CD4-positive, alpha-beta memory T cell (primary cell): ENCODE measurements at regions of chr6 and their contacts with region 1.

Region 1: DNA sequence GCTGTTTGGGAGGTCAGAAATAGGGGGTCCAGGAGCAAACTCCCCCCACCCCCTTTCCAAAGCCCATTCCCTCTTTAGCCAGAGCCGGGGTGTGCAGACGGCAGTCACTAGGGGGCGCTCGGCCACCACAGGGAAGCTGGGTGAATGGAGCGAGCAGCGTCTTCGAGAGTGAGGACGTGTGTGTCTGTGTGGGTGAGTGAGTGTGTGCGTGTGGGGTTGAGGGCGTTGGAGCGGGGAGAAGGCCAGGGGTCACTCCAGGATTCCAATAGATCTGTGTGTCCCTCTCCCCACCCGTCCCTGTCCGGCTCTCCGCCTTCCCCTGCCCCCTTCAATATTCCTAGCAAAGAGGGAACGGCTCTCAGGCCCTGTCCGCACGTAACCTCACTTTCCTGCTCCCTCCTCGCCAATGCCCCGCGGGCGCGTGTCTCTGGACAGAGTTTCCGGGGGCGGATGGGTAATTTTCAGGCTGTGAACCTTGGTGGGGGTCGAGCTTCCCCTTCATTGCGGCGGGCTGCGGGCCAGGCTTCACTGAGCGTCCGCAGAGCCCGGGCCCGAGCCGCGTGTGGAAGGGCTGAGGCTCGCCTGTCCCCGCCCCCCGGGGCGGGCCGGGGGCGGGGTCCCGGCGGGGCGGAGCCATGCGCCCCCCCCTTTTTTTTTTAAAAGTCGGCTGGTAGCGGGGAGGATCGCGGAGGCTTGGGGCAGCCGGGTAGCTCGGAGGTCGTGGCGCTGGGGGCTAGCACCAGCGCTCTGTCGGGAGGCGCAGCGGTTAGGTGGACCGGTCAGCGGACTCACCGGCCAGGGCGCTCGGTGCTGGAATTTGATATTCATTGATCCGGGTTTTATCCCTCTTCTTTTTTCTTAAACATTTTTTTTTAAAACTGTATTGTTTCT is at the start of gene VEGFA:
- DNase-seq: peak; percentile 85 to 87 (median 86)
- H3K4me3 ChIP-seq: peak within 1 kb of the TSS; percentile 82 to 90
- H3K4me3 Mint-ChIP-seq: peak within 1 kb of the TSS; percentile 85 to 98 (median 92)
- H3K27ac ChIP-seq: peak within 1 kb of the TSS; percentile 23
- H3K27ac Mint-ChIP-seq: peak within 1 kb of the TSS; percentile 54 to 89 (median 86)
- H3K4me1 ChIP-seq: peaks cover 14% of the 10 kb centered on the region
- H3K4me1 Mint-ChIP-seq: peaks cover 3 to 29% (median 18%) of the 10 kb centered on the region in 4 donors
- H3K27me3 ChIP-seq: peaks cover 5% of the 10 kb centered on the region
- H3K27me3 Mint-ChIP-seq: peaks cover 16 to 23% of the 10 kb centered on the region in 2 donors
- total RNA-seq, gene VEGFA: 0.29 to 1.1 TPM

Region 2: DNA sequence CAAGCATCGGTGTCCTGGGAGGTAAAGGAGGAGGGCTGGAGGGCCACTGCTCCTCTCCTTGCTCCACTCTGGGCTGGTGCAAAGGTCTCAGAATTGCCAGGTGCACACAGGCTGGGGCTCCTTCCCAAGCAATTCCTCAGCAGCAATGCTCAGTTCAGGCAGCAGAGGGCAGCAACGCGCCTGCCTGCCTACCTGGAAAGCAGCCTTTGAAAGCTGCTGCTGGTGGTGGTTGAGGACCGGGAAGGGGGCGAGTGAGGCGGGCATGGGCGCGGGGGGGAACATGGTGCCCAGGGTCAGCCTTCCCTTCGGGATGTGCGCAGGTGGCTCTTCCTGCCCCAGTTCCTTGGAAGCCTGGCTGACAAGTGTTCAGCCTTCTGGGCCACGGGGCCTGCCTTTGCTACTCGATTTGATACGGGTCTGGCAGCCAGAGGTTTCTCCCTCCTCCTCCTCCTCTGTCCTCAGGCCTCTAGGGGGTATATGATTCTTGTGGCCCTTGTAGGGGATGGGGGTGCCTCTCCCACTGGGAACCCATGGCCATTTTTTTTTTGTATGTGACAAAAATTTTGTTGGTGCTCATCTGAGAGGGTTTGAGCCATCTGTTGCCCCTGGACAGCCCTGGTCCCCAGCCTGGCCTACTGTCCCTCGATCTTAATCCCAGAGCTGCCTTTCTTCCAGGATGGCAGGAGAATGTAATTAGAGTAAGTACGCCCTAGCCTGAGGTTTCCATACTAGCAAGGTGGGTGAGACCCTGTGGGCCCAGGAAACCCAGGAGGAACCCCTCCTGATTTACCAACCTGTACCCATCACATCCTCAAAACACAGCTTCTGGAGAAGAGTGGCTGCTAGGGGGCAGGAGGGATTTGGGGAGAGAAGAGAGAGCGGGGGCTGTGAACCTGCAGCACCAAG is 102.3 kb before region 1 on chr6:
- CTCF ChIA-PET with region 1: interaction called, 14 read pairs
- POLR2A ChIA-PET with region 1: interaction called, 3 read pairs
- intact Hi-C with region 1: loop called (anchors 2 kb)
- DNase-seq: peak; percentile 72 to 80 (median 73)
- H3K4me3 ChIP-seq: no peak overlapping the region
- H3K4me3 Mint-ChIP-seq: peak overlapping the region in 6 of 8 donors; percentile 46 to 78 (median 64)
- H3K27ac ChIP-seq: no peak overlapping the region
- H3K27ac Mint-ChIP-seq: peak overlapping the region in 4 of 7 donors; percentile 15 to 86 (median 52)
- H3K4me1 ChIP-seq: peaks cover 26% of the 10 kb centered on the region
- H3K4me1 Mint-ChIP-seq: peaks cover 11 to 19% (median 15%) of the 10 kb centered on the region in 4 donors
- H3K27me3 ChIP-seq: no peaks in the 10 kb centered on the region
- H3K27me3 Mint-ChIP-seq: no peaks in the 10 kb centered on the region

Region 3: DNA sequence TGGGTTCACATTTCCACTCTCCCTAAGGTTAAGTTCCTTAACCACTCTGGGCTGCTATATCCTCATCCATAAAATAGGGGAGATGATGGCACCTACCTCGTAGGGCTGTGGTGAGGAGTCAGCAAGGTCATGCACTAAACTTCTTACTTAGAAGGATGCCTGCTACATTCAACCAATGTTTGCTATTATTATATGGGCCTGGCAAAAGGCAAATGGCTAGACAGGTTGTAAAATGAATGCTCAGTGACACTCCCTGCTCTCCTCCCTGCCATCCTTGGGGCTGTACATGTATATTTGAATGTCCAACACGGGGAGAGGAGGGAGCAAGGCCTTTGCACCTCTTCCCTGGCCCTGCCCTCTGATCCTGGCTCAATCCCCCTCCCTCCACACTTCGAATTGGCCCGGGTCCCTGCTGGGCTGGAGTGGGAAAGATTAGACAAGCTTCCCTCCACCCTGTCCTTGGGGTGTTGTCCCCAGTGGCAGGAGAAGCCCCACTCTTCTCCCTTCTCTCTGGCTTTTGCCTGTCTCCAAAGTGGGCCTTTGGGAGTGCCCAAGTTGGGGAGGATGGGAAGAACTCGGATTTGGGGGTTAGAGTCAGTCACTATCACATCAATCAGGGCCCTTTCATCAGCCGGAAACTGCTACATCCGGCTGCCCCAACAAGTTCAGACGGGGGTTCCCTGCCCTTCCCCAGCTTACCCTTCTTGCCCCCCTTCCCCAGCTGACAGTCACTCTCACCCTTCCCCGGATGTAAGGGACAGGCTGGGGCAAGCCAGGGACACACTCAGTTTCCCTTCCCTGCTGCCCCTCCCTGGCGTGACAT is 36.1 kb before region 1 on chr6:
- CTCF ChIA-PET with region 1: interaction called, 13 read pairs
- POLR2A ChIA-PET with region 1: no interaction called
- intact Hi-C with region 1: no loop called
- DNase-seq: peak in 2 of 5 donors; percentile 46 to 77
- H3K4me3 ChIP-seq: no peak overlapping the region
- H3K4me3 Mint-ChIP-seq: peak overlapping the region in 1 of 8 donors; percentile 18
- H3K27ac ChIP-seq: no peak overlapping the region
- H3K27ac Mint-ChIP-seq: peak overlapping the region in 6 of 7 donors; percentile 2 to 65 (median 48)
- H3K4me1 ChIP-seq: peaks cover 15% of the 10 kb centered on the region
- H3K4me1 Mint-ChIP-seq: peaks cover 0 to 22% (median 4%) of the 10 kb centered on the region in 4 donors
- H3K27me3 ChIP-seq: no peaks in the 10 kb centered on the region
- H3K27me3 Mint-ChIP-seq: no peaks in the 10 kb centered on the region

Region 4: DNA sequence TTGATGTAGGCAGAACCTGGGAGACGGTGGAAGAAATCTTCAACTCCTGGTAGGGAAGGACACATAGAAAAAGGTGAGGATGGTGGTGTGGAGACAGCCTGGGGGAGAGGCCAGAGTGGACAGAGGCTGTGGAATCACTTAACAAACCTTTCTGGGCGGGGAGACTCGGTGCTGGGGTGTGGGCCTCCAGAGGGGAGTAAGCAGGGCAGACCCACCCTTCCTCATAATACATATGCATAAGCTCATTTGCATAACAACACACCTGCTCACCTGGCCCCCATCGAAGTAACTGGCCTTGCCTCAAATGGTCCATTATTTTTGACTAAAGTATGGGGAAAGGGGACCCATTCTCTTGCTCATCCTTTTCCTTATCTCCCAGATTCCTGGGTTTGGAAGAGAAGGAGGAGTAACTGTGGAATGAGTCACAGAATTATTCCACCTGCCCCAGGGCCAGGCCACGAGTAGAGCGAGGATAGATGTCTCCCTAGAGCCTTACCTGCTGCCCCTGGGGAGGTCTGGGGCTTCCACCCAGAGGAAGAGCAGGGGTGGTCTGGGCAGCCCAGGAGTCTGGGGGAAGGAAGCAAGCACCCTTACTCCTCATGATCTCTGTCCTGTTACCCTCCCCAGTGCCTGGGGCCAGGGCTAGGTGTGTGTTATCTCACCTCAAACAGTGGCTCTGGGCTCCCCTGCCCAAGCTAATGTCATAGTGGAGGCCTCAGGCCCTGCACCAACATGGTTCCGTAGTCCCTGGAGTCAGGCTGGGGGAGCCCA is 10.4 kb before region 1 on chr6:
- CTCF ChIA-PET with region 1: interaction called, 12 read pairs
- POLR2A ChIA-PET with region 1: interaction called, 3 read pairs
- intact Hi-C with region 1: no loop called
- DNase-seq: no peak
- H3K4me3 ChIP-seq: no peak overlapping the region
- H3K4me3 Mint-ChIP-seq: no peak overlapping the region
- H3K27ac ChIP-seq: no peak overlapping the region
- H3K27ac Mint-ChIP-seq: no peak overlapping the region
- H3K4me1 ChIP-seq: no peaks in the 10 kb centered on the region
- H3K4me1 Mint-ChIP-seq: no peaks in the 10 kb centered on the region
- H3K27me3 ChIP-seq: no peaks in the 10 kb centered on the region
- H3K27me3 Mint-ChIP-seq: peaks cover 1 to 6% of the 10 kb centered on the region in 2 donors

Region 5: DNA sequence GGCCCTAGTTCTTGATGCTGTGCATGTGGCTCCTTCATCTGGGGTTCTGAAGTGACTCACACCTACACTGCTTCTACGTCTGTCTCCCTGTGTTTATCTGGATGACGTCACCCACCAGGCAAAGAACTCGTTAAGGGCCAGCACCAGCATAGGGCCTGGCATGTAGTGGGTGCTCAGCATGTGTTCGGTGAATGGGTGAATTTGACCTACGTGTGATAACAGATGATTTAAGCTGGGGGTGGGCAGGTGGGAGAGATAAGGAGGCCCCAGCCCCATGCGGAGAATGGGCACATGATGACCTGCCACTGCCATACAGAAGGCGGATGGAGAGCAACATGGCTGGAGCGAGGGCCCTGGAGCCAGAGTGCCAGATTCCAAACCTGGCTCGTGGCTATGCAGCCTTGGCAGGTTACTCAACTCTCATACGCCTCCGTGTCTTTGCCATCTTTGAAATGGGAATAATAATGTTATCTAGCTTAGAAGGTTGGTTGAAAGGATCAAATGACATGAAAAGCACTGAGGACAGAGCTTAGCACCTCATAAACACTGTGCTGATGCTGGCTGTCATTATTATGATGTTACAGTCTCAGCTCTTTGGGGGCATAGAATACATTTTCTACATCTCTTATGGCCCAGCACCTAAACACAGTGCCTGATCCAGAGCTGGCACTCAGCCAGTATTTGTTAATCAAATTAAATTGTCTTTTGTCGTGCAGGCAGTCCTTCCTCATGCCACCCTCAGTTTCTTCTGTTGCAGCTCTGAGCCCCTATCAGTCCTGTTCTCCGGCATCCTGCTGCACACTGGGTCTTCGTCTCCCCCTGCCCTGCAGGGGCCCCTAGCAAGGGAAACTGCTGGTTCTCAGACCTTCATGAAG is 39.9 kb after region 1 on chr6:
- CTCF ChIA-PET with region 1: no interaction called
- POLR2A ChIA-PET with region 1: no interaction called
- intact Hi-C with region 1: no loop called
- DNase-seq: no peak
- H3K4me3 ChIP-seq: no peak overlapping the region
- H3K4me3 Mint-ChIP-seq: no peak overlapping the region
- H3K27ac ChIP-seq: no peak overlapping the region
- H3K27ac Mint-ChIP-seq: no peak overlapping the region
- H3K4me1 ChIP-seq: peaks cover 5% of the 10 kb centered on the region
- H3K4me1 Mint-ChIP-seq: peaks cover 0 to 6% (median 2%) of the 10 kb centered on the region in 4 donors
- H3K27me3 ChIP-seq: no peaks in the 10 kb centered on the region
- H3K27me3 Mint-ChIP-seq: peaks cover 2 to 5% of the 10 kb centered on the region in 2 donors

Region 6: DNA sequence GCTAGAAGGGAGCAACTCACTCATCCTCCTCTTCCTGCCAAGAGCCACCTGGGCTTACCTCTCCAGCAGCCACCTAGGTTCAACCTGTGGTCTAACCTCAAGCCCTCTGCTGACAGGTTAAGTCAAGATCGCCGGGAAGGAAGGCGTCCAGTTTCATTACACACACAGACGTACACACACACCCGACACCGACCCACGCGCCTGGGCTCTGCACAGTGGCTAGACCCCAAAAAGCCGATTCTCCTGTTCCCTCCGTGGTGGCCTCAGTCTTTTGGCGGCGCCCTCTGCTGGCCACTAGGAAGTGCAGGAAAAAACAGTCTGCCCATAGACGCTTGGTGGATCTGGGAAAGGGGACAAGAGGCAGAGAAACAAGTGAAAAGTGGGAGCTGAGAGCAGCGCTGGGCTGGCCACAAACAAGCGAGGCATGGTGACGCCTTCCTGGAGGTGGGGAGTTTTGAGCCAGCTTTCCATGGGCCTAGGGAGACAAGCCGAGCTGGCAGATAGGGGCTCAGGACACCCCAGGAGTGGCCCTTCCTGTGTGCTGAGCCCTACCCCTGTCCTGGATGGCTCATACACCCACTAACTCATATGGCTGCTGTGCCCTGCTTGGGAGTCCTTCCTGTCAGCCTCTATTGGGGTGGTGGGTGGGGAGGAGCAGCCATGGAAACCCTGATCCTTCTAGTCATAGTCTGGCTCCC is 304.8 kb after region 1 on chr6:
- CTCF ChIA-PET with region 1: interaction called, 64 read pairs
- POLR2A ChIA-PET with region 1: interaction called, 16 read pairs
- intact Hi-C with region 1: loop called (anchors 1 kb)
- DNase-seq: peak; percentile 60 to 68 (median 63)
- H3K4me3 ChIP-seq: peak overlapping the region in 1 of 2 donors; percentile 14
- H3K4me3 Mint-ChIP-seq: peak overlapping the region; percentile 71 to 91 (median 88)
- H3K27ac ChIP-seq: no peak overlapping the region
- H3K27ac Mint-ChIP-seq: peak overlapping the region in 5 of 7 donors; percentile 20 to 58 (median 43)
- H3K4me1 ChIP-seq: peaks cover 20% of the 10 kb centered on the region
- H3K4me1 Mint-ChIP-seq: peaks cover 15 to 26% (median 18%) of the 10 kb centered on the region in 4 donors
- H3K27me3 ChIP-seq: no peaks in the 10 kb centered on the region
- H3K27me3 Mint-ChIP-seq: peaks cover 10 to 13% of the 10 kb centered on the region in 2 donors

Region 7: GRCh38 chr6:44431118-44431725 is 661.5 kb after region 1 on chr6:
- CTCF ChIA-PET with region 1: no interaction called
- POLR2A ChIA-PET with region 1: no interaction called
- intact Hi-C with region 1: no loop called
- DNase-seq: peak; percentile 21 to 45 (median 33)
- H3K4me3 ChIP-seq: no peak overlapping the region
- H3K4me3 Mint-ChIP-seq: no peak overlapping the region
- H3K27ac ChIP-seq: no peak overlapping the region
- H3K27ac Mint-ChIP-seq: peak overlapping the region in 2 of 7 donors; percentile 36 to 55
- H3K4me1 ChIP-seq: no peaks in the 10 kb centered on the region
- H3K4me1 Mint-ChIP-seq: peaks cover 0 to 16% (median 8%) of the 10 kb centered on the region in 4 donors
- H3K27me3 ChIP-seq: no peaks in the 10 kb centered on the region
- H3K27me3 Mint-ChIP-seq: no peaks in the 10 kb centered on the region